Right cardiac atrium (tissue), 5 donors: ENCODE measurements at regions of chr11 and their contacts with region 1.

Region 1: GRCh38 chr11:86938900-86939880 is 16.0 kb downstream of the FZD4 start:
- DNase-seq: no peak
- ATAC-seq: no peak
- H3K4me3 ChIP-seq: no peak overlapping the region
- H3K27ac ChIP-seq: no peak overlapping the region
- H3K4me1 ChIP-seq: peaks cover 11% of the 10 kb centered on the region
- H3K27me3 ChIP-seq: no peaks in the 10 kb centered on the region

Region 2: GRCh38 chr11:87290304-87290922 is 351.2 kb after region 1 on chr11:
- intact Hi-C with region 1: loop called (anchors 5 kb)
- DNase-seq: no peak
- ATAC-seq: no peak
- H3K4me3 ChIP-seq: no peak overlapping the region
- H3K27ac ChIP-seq: no peak overlapping the region
- H3K4me1 ChIP-seq: no peaks in the 10 kb centered on the region
- H3K27me3 ChIP-seq: no peaks in the 10 kb centered on the region

Region 3: DNA sequence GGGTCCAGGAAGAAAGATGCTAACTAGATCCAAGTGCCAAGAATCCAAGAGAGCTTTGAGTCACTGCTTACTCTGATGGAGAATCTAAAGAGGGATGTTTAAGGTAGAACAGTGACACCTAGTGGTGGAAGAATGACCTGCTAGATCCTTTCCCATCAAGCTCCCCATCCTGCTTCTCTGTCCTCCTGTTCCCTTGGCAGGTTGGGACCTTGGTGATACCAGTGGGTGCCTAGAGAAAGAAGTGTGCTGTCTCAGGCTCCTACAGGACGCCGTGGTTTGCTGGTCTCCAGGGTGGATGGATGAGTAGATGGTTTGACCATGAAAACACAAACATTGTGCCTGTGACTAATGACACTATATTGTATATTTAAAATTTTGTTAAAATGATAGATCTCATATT is 482.2 kb after region 1 on chr11:
- intact Hi-C with region 1: loop called in 1 of 4 experiments (anchors 10 kb)
- DNase-seq: no peak
- ATAC-seq: peak; percentile 86 to 88
- H3K4me3 ChIP-seq: no peak overlapping the region
- H3K27ac ChIP-seq: no peak overlapping the region
- H3K4me1 ChIP-seq: no peaks in the 10 kb centered on the region
- H3K27me3 ChIP-seq: no peaks in the 10 kb centered on the region